Activated naive CD8-positive, alpha-beta T cell treated with anti-CD3 and anti-CD28 coated beads, Interleukin-2, amount 10 ng/mL, durations not matched to agents 7 days and 5 days (primary cell): ENCODE measurements at regions of chr22 and their contacts with region 1.

Region 1: DNA sequence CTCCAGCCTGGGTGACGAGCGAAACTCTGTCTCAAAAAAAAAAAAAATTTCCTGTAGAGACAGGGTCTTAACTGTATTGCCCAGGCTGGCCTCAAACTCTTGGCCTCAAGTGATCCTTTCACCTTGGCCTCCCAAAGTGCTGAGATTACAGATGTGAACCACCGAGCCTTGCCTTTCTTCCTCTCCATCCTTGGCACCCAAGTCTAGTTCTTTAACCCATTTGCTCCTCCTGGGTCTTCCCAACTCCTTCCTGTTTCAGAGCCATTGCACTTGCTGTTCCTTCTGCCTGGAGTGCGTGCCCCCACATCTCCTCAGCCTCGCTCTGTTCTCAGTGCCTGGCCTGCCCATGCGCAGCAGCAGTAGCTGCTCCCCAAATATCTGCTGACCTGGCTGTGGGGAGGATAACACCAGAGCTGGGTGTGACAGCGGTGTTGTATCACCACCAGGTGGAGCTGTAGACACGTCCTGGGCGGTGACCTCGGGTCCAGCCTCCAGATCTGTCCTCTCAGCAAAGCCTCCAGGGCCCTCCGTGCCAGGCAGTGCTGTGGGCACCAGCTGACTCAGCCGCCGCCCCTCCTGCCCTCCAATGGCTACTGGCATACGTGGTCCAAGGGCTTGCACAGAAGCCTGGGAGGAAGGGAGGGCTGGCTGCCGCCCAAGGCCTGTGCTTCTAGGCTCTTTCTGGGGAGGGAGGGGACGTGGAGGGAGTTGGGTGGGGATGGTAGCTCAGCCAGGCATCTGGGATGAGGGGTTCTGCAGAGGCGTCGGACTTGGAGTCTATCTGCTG is 22.0 kb downstream of the TEF start:
- DNase-seq: peak; percentile 81
- ATAC-seq: peak; percentile 99
- H3K4me3 Mint-ChIP-seq: peak overlapping the region; percentile 49
- H3K27ac Mint-ChIP-seq: peak overlapping the region; percentile 70
- H3K4me1 Mint-ChIP-seq: peaks cover 5% of the 10 kb centered on the region
- H3K27me3 Mint-ChIP-seq: no peaks in the 10 kb centered on the region

Region 2: DNA sequence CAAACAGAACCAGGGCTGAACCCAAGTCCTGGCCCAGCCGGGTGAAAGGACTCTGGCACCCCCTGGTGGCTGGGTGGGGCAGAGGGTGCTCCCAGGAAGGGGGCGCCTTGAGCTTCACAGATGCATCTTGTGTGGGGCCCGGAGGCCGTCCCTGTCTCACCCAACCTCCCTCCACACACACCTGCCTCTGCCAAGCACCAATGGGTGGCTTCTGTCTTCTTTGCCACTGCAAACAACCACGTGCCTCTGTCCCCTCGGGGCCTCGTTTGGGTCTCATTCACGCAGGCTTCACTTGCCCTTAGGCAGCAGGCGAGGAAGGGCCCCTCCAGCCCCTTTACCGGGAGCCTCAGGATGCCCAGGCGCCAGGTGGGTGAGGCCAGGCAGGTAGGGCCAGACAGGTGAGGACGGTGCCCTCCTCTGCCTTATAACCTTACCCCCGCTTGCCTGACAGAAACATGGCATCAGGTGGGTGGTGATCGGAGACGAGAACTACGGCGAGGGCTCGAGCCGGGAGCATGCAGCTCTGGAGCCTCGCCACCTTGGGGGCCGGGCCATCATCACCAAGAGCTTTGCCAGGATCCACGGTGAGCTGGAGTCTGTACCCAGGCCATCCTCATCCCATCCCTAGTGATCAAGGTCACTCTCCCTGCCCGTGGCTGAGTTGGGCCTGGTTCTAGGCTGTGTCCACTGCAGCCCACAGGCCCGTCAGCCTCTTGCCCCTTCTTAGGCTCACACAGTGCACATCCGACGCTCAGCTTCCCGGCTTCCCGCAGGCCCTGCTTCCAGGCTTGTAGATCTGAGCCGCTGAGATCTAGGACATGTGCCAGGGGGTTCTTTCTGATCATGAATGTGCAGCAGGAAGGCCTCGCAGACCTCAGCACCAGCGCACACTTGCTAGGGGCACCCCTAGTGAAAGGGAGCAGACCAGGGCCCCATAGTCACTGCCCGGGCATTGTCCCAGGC is 123.4 kb after region 1 on chr22:
- POLR2A ChIA-PET with region 1: interaction called, 12 read pairs
- DNase-seq: peak; percentile 80
- ATAC-seq: peak; percentile 35
- H3K4me3 Mint-ChIP-seq: no peak overlapping the region
- H3K27ac Mint-ChIP-seq: peak overlapping the region; percentile 54
- H3K4me1 Mint-ChIP-seq: peaks cover 12% of the 10 kb centered on the region
- H3K27me3 Mint-ChIP-seq: no peaks in the 10 kb centered on the region